Mammary epithelial cell (primary cell): ENCODE measurements at regions of chr11 and their contacts with region 1.

Region 1: GRCh38 chr11:124673333-124674167 is at the starts of genes SIAE and SPA17:
- DNase-seq: peak; percentile 95
- H3K4me3 ChIP-seq: peak within 1 kb of the TSS; percentile 67 to 71 (median 70)
- H3K27ac ChIP-seq: peak within 1 kb of the TSS; percentile 78
- H3K4me1 ChIP-seq: peaks cover 14% of the 10 kb centered on the region
- H3K27me3 ChIP-seq: no peaks in the 10 kb centered on the region
- CTCF ChIP-seq: no peak
- total RNA-seq, gene SIAE: 13.7 to 13.8 TPM
- total RNA-seq, gene SPA17: 6.2 to 8.9 TPM

Region 2: GRCh38 chr11:124758317-124759203 is 85.0 kb after region 1 on chr11:
- CTCF ChIA-PET with region 1: interaction called, 3 read pairs
- dilution Hi-C with region 1: no loop called
- in situ Hi-C with region 1: loop called in 1 of 2 experiments (anchors 10 kb)
- intact Hi-C with region 1: loop called (anchors 1 kb)
- DNase-seq: peak; percentile 45
- H3K4me3 ChIP-seq: peak overlapping the region in 2 of 3 experiments; percentile 10 to 22
- H3K27ac ChIP-seq: no peak overlapping the region
- H3K4me1 ChIP-seq: peaks cover 20% of the 10 kb centered on the region
- H3K27me3 ChIP-seq: peaks cover 25% of the 10 kb centered on the region
- CTCF ChIP-seq: peak; percentile 49 to 73

Region 3: DNA sequence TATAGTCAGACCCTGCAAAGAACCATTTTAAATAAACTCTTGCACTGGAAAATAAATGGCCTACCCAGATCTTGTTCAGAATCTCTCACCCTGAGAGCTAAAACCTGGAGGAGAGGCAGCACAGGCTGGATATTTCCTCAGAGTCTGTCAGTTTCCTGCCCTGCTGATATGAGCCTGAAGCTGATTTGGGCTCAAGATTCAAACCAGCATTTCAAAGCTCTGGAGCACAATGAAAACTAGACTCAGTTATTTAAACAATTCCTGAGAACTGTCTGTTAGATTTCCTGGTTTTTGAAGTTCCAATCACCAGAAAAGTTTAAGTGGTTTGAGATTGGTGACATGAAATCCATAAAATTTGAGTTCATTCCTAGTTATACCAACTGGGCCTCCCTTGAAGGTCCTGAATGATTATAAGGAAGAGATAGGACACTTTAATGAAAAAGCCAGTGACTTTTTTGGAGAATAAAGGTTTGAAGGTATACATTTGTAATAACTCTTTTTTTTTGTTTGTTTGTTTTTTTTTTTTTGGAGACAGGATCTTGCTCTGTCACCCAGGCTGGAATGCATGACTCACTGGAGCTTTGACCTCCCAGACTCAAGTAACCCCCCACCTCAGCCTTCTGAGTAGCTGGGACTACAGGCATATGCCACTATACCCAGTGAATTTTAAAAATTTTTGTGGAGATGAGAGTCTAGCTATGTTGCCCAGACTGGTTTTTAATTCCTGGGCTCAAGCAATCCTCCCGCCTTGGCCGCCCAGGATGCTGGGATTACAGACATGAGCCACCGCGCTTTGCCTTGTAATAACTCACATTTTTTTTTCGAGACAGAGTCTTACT is 96.5 kb after region 1 on chr11:
- CTCF ChIA-PET with region 1: interaction called, 8 read pairs
- dilution Hi-C with region 1: no loop called
- in situ Hi-C with region 1: loop called (anchors 5 to 10 kb)
- intact Hi-C with region 1: no loop called
- DNase-seq: no peak
- H3K4me3 ChIP-seq: no peak overlapping the region
- H3K27ac ChIP-seq: no peak overlapping the region
- H3K4me1 ChIP-seq: peaks cover 4% of the 10 kb centered on the region
- H3K27me3 ChIP-seq: no peaks in the 10 kb centered on the region
- CTCF ChIP-seq: no peak

Region 4: DNA sequence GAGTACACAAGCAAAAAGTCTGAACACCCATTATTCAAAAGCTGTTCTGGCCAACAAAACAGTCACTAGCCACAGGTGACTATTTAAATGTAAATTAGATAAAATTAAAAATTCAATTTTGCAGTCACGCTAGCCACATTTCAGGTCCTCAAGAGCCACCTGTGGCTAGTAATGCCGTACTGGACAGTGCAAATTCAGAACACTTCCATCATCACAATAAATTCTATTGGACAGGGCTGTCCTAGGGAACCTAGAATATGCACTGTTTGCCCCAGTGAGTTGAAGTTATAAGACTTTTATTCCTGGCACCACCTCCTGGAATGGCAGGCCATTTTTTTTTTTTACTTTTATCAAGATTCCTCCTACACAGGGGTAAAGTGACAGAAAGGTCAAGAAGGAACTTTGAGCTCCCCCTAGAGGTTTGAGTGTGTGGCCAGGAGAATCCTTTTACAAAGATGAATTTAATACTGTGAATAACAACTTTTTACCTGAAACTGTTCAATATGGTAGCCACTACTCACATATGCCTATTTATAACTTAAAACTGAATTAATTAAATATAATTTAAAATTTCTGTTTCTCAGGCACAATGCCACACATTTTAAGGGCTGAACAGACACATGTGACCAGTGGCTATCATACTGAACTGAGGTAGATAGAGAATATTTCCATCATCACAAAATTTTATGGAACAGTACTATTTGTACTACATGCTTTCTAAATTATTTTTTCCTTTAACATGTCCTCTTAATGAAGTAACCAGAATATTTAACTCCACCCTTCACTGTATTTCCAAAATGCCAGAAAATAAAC is 120.1 kb after region 1 on chr11:
- CTCF ChIA-PET with region 1: no interaction called
- dilution Hi-C with region 1: no loop called
- in situ Hi-C with region 1: no loop called
- intact Hi-C with region 1: loop called (anchors 1 kb)
- DNase-seq: peak; percentile 35
- H3K4me3 ChIP-seq: no peak overlapping the region
- H3K27ac ChIP-seq: no peak overlapping the region
- H3K4me1 ChIP-seq: peaks cover 3% of the 10 kb centered on the region
- H3K27me3 ChIP-seq: no peaks in the 10 kb centered on the region
- CTCF ChIP-seq: peak; percentile 70 to 77

Region 5: GRCh38 chr11:124865921-124866583 is 192.5 kb after region 1 on chr11:
- CTCF ChIA-PET with region 1: no interaction called
- dilution Hi-C with region 1: no loop called
- in situ Hi-C with region 1: no loop called
- intact Hi-C with region 1: loop called (anchors 1 kb)
- DNase-seq: no peak
- H3K4me3 ChIP-seq: peak overlapping the region in 1 of 3 experiments; percentile 11
- H3K27ac ChIP-seq: no peak overlapping the region
- H3K4me1 ChIP-seq: peaks cover 25% of the 10 kb centered on the region
- H3K27me3 ChIP-seq: peaks cover 68% of the 10 kb centered on the region
- CTCF ChIP-seq: peak; percentile 39 to 75